Motor neuron (in vitro differentiated cells): ENCODE measurements at regions of chr3 and their contacts with region 1.

Region 1: GRCh38 chr3:184583578-184584425 is 22.2 kb downstream of the EPHB3 start:
- ATAC-seq: peak; percentile 67 to 83 (median 78)
- H3K4me3 ChIP-seq: peak overlapping the region; percentile 6 to 28 (median 22)
- H3K27ac ChIP-seq: peak overlapping the region; percentile 80 to 93
- H3K4me1 ChIP-seq: peaks cover 32 to 33% of the 10 kb centered on the region in 2 donors

Region 2: DNA sequence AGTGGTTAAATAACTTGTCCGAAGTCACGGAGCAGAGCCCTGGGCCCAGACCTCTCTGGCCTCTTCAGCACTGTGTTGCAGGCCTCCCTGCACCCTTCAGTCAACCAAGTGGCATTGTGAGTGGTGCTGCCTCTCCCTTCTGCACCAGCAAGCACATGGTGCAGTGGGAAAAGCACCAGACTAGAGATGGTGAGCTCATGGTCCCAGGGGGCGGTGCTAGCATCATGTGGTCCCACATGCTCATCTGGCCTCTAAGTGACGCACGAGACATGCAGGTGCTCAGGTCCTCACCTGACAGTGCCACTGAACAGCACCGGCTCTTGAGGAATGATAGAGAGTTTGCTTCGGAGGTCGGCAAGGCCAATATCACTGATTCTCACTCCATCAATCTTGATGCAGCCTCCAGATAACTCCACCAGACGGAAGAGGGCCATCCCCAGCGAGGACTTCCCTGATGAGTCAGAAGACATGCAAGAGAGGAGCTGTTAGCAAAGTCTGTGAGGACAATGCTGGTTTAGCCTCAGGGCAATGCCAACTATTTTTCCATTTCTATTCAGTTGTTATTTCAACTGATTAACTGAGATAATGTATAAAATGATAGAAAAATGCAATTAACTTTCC is 646.1 kb before region 1 on chr3:
- in situ Hi-C with region 1: no loop called
- ATAC-seq: peak in 1 of 8 experiments; percentile 21
- H3K4me3 ChIP-seq: no peak overlapping the region
- H3K27ac ChIP-seq: no peak overlapping the region
- H3K4me1 ChIP-seq: no peaks in the 10 kb centered on the region

Region 3: DNA sequence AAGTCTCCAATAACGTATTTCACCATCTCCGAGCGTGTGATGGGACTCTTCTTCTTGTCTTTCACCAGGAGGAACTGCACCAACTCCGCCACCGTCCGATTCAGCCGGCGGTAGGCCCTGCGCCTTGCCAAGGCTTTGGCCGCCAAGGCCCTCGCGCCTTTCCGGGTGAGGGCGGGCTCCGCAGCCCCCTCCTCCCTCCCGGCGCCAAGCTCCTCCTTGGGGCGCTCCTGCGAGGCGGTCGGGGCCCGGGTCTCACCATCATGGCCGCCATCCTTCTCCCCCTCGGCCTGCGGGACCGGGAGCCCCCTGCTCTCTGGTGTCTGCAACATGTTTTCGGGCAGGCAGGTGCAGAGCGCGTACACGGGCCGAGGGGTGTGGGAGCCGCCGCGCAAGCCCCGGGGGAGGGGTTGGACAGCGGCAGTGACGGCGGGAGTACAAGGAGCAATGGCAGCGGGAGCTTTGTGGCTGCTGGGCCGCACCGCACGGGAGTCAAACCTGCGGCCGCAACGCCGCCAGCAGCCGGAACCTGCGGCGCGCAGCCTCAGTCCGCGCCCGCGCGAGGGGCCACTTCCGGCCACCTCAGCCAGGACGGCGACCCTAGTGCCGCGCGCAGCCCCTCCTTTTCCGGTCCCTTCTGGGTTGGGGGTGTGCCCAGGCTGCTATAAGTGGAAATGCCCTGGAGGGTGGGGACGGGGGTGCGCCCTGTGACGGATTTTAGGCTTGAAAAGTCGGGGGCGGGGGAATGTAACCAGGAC is 127.9 kb after region 1 on chr3 and contains the start of gene MAGEF1:
- in situ Hi-C with region 1: loop called in 1 of 9 experiments (anchors 25 kb)
- ATAC-seq: peak; percentile 86 to 94 (median 91)
- H3K4me3 ChIP-seq: peak within 1 kb of the TSS; percentile 73 to 99 (median 86)
- H3K27ac ChIP-seq: peak within 1 kb of the TSS; percentile 97 to 100
- H3K4me1 ChIP-seq: peaks cover 5 to 13% of the 10 kb centered on the region in 2 donors
- total RNA-seq, gene MAGEF1: 52.0 to 118 (median 81.4) TPM

Region 4: GRCh38 chr3:184727357-184728009 is 143.7 kb after region 1 on chr3:
- in situ Hi-C with region 1: loop called in 2 of 9 experiments (anchors 10 to 25 kb)
- ATAC-seq: peak; percentile 42 to 98 (median 94)
- H3K4me3 ChIP-seq: no peak overlapping the region
- H3K27ac ChIP-seq: no peak overlapping the region
- H3K4me1 ChIP-seq: peaks cover 25 to 35% of the 10 kb centered on the region in 2 donors